CD14-positive monocyte (primary cell): ENCODE measurements at regions of chr7 and their contacts with region 1.

Region 1: DNA sequence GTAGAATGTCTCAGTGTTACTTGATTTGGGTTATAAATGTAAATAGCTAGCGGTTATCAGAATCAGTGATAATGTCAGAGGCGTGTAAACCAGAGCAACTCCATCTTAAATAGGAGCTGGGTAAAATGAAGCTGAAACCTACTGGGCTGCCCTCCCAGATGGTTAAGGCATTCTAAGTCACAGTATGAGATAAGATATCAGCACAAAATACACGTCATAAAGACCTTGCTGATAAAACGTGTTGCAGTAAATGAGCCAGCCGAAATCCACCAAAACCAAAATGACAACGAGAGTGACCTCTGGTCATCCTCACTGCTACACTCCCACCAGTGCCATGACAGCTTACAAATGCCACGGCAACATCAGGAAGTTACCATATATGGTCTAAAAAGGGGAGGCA is 172.3 kb downstream of the CHRM2 start:
- DNase-seq: no peak
- H3K4me3 ChIP-seq: no peak overlapping the region
- H3K4me3 Mint-ChIP-seq: no peak overlapping the region
- H3K27ac ChIP-seq: no peak overlapping the region
- H3K27ac Mint-ChIP-seq: no peak overlapping the region
- H3K4me1 ChIP-seq: no peaks in the 10 kb centered on the region
- H3K4me1 Mint-ChIP-seq: no peaks in the 10 kb centered on the region
- H3K27me3 ChIP-seq: no peaks in the 10 kb centered on the region
- H3K27me3 Mint-ChIP-seq: no peaks in the 10 kb centered on the region
- CTCF ChIP-seq: no peak

Region 2: GRCh38 chr7:136976504-136977251 is 64.1 kb before region 1 on chr7:
- intact Hi-C with region 1: loop called in 1 of 2 experiments (anchors 10 kb)
- DNase-seq: no peak
- H3K4me3 ChIP-seq: no peak overlapping the region
- H3K4me3 Mint-ChIP-seq: no peak overlapping the region
- H3K27ac ChIP-seq: no peak overlapping the region
- H3K27ac Mint-ChIP-seq: no peak overlapping the region
- H3K4me1 ChIP-seq: no peaks in the 10 kb centered on the region
- H3K4me1 Mint-ChIP-seq: no peaks in the 10 kb centered on the region
- H3K27me3 ChIP-seq: no peaks in the 10 kb centered on the region
- H3K27me3 Mint-ChIP-seq: peaks cover 0 to 3% (median 0%) of the 10 kb centered on the region in 3 donors
- CTCF ChIP-seq: no peak

Region 3: DNA sequence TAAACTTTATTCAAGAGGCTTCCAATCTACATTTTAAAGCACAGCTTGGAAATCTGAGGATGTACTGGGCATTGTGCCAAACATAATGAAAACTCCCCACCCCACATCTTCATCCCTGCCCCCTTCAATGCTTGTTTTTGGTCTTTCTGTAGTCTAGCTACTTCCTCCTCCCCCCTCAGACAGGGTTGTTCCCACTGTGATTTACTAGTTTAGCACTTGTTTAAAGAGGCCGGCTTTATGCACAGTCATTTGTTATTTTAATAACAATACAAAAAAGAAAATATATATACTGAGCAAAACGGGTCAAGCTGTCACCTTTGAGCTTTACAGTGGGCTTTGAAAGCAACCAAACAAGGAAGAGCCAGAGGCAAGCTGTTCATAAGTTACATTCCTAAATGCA is 39.7 kb before region 1 on chr7:
- intact Hi-C with region 1: no loop called
- DNase-seq: no peak
- H3K4me3 ChIP-seq: no peak overlapping the region
- H3K4me3 Mint-ChIP-seq: no peak overlapping the region
- H3K27ac ChIP-seq: no peak overlapping the region
- H3K27ac Mint-ChIP-seq: no peak overlapping the region
- H3K4me1 ChIP-seq: no peaks in the 10 kb centered on the region
- H3K4me1 Mint-ChIP-seq: no peaks in the 10 kb centered on the region
- H3K27me3 ChIP-seq: no peaks in the 10 kb centered on the region
- H3K27me3 Mint-ChIP-seq: no peaks in the 10 kb centered on the region
- CTCF ChIP-seq: no peak